ENCODE measurements at regions of chr17 and their contacts with region 1.

Region 1: GRCh38 chr17:82674656-82675475 is 23.6 kb downstream of the RAB40B start:
- DNase-seq: peak in 4 of 10 donors; percentile 50 to 81 (median 70)
- H3K4me3 ChIP-seq: peak overlapping the region in 21 of 59 donors; percentile 3 to 46 (median 22)
- H3K27ac ChIP-seq: peak overlapping the region; percentile 84 to 99 (median 96)
- H3K27me3 ChIP-seq: no peaks in the 10 kb centered on the region
- CTCF ChIP-seq: peak in 2 of 56 donors; percentile 18 to 21

Region 2: DNA sequence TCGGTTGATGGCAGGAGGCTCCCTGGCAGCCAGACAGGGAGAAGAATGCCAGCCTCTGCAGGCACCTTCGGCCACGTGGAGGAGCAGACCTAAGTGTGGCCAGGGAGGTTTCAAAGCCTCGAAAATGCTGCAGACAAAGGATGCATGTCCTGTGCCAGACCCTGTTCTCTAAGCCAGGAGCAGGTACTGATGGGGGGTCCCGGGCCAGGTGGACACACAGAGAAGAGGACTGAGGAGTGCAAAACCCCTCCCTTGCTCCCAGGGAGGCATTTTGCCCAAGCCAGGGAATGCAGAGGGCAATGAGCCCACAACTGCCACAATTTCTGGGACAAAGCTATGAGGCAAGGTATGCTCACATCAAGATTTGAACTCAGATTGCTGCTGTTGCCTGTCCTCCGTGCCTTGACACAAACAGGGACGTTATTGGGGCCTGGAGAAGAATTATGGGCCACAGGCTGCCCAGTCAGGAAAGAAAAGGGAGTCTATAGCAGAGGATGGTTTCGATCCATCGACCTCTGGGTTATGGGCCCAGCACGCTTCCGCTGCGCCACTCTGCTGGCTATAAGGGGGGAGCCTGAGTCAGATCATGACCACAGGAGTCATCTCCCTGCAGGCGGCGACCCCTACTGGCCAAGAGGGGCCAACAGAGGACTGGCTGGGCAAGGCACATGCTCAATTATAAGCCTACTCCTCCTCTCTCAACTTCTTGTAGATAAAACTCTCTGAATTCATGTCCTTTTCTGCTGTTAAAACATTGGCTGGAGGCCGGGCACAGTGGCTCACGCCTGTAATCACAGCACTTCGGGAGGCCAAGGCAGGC is 180.4 kb before region 1 on chr17:
- intact Hi-C with region 1: no loop called
- DNase-seq: peak; percentile 85 to 95 (median 90)
- H3K4me3 ChIP-seq: peak overlapping the region in 21 of 59 donors; percentile 2 to 39 (median 19)
- H3K27ac ChIP-seq: peak overlapping the region in 57 of 59 donors; percentile 15 to 97 (median 70)
- H3K27me3 ChIP-seq: no peaks in the 10 kb centered on the region
- CTCF ChIP-seq: peak; percentile 71 to 96 (median 90)

Region 3: DNA sequence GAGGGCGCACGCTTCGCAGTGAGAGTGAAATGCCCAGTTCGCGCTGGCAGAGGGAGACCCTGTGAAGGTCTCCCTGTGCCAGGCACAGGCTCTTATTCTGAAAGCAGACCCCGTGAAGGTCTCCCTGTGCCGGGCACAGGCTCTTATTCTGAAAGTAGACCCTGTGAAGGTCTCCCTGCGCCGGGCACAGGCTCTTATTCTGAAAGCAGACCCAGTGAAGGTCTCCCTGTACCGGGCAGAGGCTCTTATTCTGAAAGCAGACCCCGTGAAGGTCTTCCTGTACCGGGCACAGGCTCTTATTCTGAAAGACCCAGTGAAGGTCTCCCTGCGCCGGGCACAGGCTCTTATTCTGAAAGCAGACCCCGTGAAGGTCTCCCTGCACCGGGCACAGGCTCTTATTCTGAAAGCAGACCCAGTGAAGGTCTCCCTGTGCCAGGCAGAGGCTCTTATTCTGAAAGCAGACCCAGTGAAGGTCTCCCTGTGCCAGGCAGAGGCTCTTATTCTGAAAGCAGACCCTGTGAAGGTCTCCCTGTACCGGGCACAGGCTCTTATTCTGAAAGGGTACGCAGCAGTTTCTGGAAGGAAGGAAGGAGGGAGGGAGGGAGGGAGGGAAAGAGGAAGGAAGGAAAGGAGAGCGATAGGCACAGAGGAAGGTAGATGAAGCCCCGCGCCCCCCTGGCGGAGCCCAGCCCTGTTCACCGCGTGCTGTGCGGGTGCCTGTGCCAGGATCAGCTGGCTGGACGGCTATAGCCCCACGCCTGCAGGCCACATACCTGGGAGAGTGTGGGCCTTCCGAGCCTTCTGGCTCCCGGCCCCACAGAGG is 81.9 kb before region 1 on chr17:
- intact Hi-C with region 1: no loop called
- DNase-seq: peak in 9 of 10 donors; percentile 71 to 93 (median 83)
- H3K4me3 ChIP-seq: peak overlapping the region; percentile 46 to 96 (median 74)
- H3K27ac ChIP-seq: peak overlapping the region; percentile 95 to 100 (median 100)
- H3K27me3 ChIP-seq: no peaks in the 10 kb centered on the region
- CTCF ChIP-seq: peak in 4 of 56 donors; percentile 8 to 21 (median 10)

Region 4: GRCh38 chr17:82648166-82648668 is 26.6 kb before region 1 on chr17 and contains the start of gene WDR45B:
- intact Hi-C with region 1: no loop called
- DNase-seq: peak; percentile 88 to 98 (median 95)
- H3K4me3 ChIP-seq: peak within 1 kb of the TSS; percentile 62 to 100 (median 97)
- H3K27ac ChIP-seq: peak within 1 kb of the TSS; percentile 55 to 99 (median 94)
- H3K27me3 ChIP-seq: no peaks in the 10 kb centered on the region
- CTCF ChIP-seq: peak in 2 of 56 donors; percentile 10 to 13
- total RNA-seq, gene WDR45B: 61.0 to 110 (median 83.4) TPM

Region 5: GRCh38 chr17:82690771-82691489 is 16.1 kb after region 1 on chr17:
- intact Hi-C with region 1: loop called in 1 of 2 experiments (anchors 2 kb)
- DNase-seq: peak in 2 of 10 donors; percentile 76 to 80
- H3K4me3 ChIP-seq: peak overlapping the region in 25 of 59 donors; percentile 3 to 35 (median 21)
- H3K27ac ChIP-seq: peak overlapping the region; percentile 77 to 98 (median 94)
- H3K27me3 ChIP-seq: no peaks in the 10 kb centered on the region
- CTCF ChIP-seq: peak in 1 of 56 donors; percentile 10

Region 6: GRCh38 chr17:82734987-82735866 is 60.4 kb after region 1 on chr17 and contains the start of gene FN3K:
- intact Hi-C with region 1: loop called in 1 of 2 experiments (anchors 5 kb)
- DNase-seq: peak; percentile 56 to 82 (median 73)
- H3K4me3 ChIP-seq: peak within 1 kb of the TSS; percentile 65 to 90 (median 83)
- H3K27ac ChIP-seq: peak within 1 kb of the TSS; percentile 79 to 99 (median 96)
- H3K27me3 ChIP-seq: no peaks in the 10 kb centered on the region
- CTCF ChIP-seq: peak in 4 of 56 donors; percentile 15 to 30 (median 16)
- total RNA-seq, gene FN3K: 62.5 to 210 (median 123) TPM

Region 7: GRCh38 chr17:82823004-82823403 is 148.1 kb after region 1 on chr17:
- intact Hi-C with region 1: no loop called
- DNase-seq: no peak
- H3K4me3 ChIP-seq: no peak overlapping the region
- H3K27ac ChIP-seq: no peak overlapping the region
- H3K27me3 ChIP-seq: no peaks in the 10 kb centered on the region
- CTCF ChIP-seq: peak in 3 of 56 donors; percentile 18 to 27 (median 20)